Activated CD8-positive, alpha-beta T cell treated with anti-CD3 and anti-CD28 coated beads, Interleukin-2, amount 10 ng/mL, durations not matched to agents 7 days and 5 days (primary cell): ENCODE measurements at regions of chr5 and their contacts with region 1.

Region 1: DNA sequence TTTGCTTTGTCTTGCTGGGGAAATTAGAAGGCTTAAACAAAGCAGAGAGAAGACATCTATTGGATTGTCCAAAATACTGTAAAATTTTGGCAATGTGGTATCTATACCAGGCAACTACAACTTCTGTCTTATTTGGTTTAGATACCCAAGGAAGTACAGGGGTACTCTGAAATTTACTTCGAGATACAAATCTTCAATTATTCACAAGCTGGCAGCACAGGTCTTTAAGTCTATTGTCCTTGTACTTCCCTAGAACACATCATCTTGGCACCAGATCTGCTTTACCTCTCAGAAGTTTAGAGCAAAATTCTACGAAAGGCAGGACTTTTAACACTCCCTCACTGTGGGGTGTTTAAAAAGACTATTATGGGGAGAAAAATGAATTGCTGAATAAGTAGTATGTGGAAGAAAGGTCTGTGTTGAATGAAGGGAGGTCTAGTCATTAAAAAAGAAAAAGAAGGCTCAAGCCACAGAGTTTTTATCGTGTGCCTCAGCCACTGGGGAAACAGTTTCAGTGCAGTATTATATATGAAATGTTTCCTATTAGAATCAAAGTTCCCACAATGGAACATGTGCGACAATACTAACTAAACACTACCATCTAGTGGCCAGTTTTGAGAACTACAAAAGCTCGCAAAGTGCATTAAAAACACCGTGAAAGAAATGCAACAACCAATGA is 93.7 kb downstream of the PDE4D start:
- DNase-seq: peak; percentile 31
- ATAC-seq: peak; percentile 53
- H3K4me3 Mint-ChIP-seq: no peak overlapping the region
- H3K27ac Mint-ChIP-seq: no peak overlapping the region
- H3K4me1 Mint-ChIP-seq: no peaks in the 10 kb centered on the region
- H3K27me3 Mint-ChIP-seq: no peaks in the 10 kb centered on the region

Region 2: DNA sequence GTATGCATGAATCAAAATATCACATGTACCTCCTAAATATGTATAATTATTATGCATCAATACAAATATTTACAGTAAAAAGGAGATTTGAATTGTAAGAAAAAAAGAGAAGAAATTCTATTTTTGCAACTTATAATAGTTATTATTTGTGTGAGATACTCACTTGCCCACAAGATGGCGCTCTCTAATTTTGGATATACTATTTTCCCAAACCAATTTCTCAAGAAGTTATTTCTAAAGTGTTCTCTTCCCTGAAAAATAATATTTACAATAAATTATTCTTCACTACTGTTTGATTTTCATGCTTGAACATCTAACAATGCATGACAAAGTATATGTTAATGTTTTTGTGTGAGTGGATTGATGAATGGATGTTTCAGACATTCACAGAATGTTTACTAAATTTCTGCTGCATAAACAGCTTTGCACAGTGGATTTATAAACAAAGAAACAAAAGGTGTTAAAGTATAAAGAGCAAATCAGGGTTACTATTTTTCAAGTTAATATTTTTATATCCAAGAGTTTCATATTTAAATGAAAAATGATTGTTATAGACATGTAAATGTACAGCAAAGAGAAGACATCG is 409.6 kb before region 1 on chr5:
- CTCF ChIA-PET with region 1: interaction called, 11 read pairs
- POLR2A ChIA-PET with region 1: no interaction called
- DNase-seq: peak; percentile 39
- ATAC-seq: no peak
- H3K4me3 Mint-ChIP-seq: no peak overlapping the region
- H3K27ac Mint-ChIP-seq: no peak overlapping the region
- H3K4me1 Mint-ChIP-seq: no peaks in the 10 kb centered on the region
- H3K27me3 Mint-ChIP-seq: peaks cover 15% of the 10 kb centered on the region

Region 3: DNA sequence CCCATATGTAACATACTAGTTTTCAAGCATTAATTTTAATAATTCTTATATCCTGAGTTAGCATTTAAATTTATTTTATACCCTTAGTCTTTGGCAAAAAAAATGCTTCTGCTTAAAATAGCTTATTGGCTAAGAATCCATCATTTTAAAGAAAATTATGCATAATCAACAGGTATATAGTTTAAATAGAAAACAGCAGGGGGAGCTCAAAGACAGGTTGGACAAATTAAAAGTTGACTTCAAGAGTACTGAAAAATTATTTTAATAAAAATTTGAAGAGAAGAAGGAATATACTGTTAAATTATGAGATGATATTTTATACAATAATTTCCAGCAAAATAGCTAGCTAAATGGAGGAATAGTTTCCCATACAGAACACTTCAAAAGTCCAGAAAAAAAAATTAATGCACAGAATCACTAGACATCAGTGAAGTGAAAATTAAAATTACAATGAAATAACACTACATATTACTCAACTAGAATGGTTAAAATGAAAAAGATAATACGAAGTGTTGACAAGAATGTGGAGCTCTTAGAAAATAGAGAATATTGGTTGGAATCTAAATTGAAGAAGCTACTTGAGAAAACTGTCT is 293.4 kb before region 1 on chr5:
- CTCF ChIA-PET with region 1: interaction called, 10 read pairs
- POLR2A ChIA-PET with region 1: no interaction called
- DNase-seq: no peak
- ATAC-seq: no peak
- H3K4me3 Mint-ChIP-seq: no peak overlapping the region
- H3K27ac Mint-ChIP-seq: no peak overlapping the region
- H3K4me1 Mint-ChIP-seq: no peaks in the 10 kb centered on the region
- H3K27me3 Mint-ChIP-seq: peaks cover 7% of the 10 kb centered on the region

Region 4: GRCh38 chr5:59673438-59674058 is 126.3 kb before region 1 on chr5:
- CTCF ChIA-PET with region 1: interaction called, 13 read pairs
- POLR2A ChIA-PET with region 1: no interaction called
- DNase-seq: no peak
- ATAC-seq: no peak
- H3K4me3 Mint-ChIP-seq: no peak overlapping the region
- H3K27ac Mint-ChIP-seq: no peak overlapping the region
- H3K4me1 Mint-ChIP-seq: no peaks in the 10 kb centered on the region
- H3K27me3 Mint-ChIP-seq: peaks cover 8% of the 10 kb centered on the region

Region 5: DNA sequence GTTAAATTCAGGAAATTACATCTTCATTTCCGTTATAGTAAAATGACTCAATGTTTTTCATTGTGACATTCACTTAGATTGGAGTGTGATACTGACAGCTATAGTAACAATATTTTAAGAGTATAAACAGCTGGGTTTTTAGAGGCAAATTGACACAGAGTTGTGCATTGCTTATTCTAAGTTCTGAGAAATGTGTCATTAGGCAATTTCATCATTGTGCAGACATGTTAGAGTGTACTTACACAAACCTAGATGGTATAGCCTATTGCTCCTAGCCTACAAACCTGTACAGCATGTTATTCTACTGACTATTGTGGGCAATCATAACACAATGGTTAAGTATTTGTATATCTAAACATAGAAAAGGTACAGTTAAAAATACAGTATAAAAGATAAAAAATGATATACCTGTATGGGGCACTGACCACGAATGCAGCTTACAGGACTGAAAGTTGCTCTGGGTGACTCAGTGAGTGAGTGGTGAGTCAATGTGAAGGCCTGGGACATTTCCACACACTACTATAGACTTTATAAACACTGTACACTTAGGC is 38.9 kb before region 1 on chr5:
- CTCF ChIA-PET with region 1: no interaction called
- POLR2A ChIA-PET with region 1: no interaction called
- DNase-seq: no peak
- ATAC-seq: no peak
- H3K4me3 Mint-ChIP-seq: no peak overlapping the region
- H3K27ac Mint-ChIP-seq: no peak overlapping the region
- H3K4me1 Mint-ChIP-seq: no peaks in the 10 kb centered on the region
- H3K27me3 Mint-ChIP-seq: peaks cover 3% of the 10 kb centered on the region

Region 6: DNA sequence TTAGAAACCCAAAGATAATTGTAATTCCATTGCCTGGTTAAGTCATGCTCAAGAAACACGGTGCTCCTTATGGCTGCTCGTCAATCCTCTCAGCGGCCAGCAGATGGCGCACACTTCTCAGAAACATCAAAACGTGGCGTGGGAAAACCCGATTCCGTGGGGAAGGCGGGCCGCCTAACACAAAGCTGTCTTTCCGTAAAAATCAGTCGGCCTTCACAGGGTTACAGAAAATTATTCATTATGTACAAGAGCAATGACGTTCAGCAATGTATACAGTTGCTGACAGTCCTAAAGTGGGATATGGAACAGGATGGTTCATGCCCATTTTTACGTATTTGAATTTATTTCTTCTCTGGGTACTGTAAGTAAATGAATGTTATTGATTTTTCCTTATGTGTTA is 10.2 kb after region 1 on chr5:
- CTCF ChIA-PET with region 1: interaction called, 23 read pairs
- POLR2A ChIA-PET with region 1: no interaction called
- DNase-seq: peak; percentile 63
- ATAC-seq: peak; percentile 76
- H3K4me3 Mint-ChIP-seq: no peak overlapping the region
- H3K27ac Mint-ChIP-seq: no peak overlapping the region
- H3K4me1 Mint-ChIP-seq: peaks cover 3% of the 10 kb centered on the region
- H3K27me3 Mint-ChIP-seq: peaks cover 6% of the 10 kb centered on the region

Region 7: GRCh38 chr5:59943452-59944113 is 143.8 kb after region 1 on chr5:
- CTCF ChIA-PET with region 1: no interaction called
- POLR2A ChIA-PET with region 1: no interaction called
- DNase-seq: no peak
- ATAC-seq: no peak
- H3K4me3 Mint-ChIP-seq: no peak overlapping the region
- H3K27ac Mint-ChIP-seq: no peak overlapping the region
- H3K4me1 Mint-ChIP-seq: no peaks in the 10 kb centered on the region
- H3K27me3 Mint-ChIP-seq: no peaks in the 10 kb centered on the region